WTC11 (cell line): ENCODE measurements at regions of chr1 and their contacts with region 1.

Region 1: GRCh38 chr1:7667625-7668218 is 103.4 kb upstream of the VAMP3 start:
- DNase-seq: peak; percentile 96
- ATAC-seq: peak; percentile 60
- H3K4me3 Mint-ChIP-seq: no peak overlapping the region
- H3K27ac Mint-ChIP-seq: no peak overlapping the region
- H3K4me1 Mint-ChIP-seq: peaks cover 19% of the 10 kb centered on the region
- H3K27me3 Mint-ChIP-seq: no peaks in the 10 kb centered on the region; the same call in 1 of the 2 replicates
- CTCF ChIP-seq: peak; percentile 99

Region 2: DNA sequence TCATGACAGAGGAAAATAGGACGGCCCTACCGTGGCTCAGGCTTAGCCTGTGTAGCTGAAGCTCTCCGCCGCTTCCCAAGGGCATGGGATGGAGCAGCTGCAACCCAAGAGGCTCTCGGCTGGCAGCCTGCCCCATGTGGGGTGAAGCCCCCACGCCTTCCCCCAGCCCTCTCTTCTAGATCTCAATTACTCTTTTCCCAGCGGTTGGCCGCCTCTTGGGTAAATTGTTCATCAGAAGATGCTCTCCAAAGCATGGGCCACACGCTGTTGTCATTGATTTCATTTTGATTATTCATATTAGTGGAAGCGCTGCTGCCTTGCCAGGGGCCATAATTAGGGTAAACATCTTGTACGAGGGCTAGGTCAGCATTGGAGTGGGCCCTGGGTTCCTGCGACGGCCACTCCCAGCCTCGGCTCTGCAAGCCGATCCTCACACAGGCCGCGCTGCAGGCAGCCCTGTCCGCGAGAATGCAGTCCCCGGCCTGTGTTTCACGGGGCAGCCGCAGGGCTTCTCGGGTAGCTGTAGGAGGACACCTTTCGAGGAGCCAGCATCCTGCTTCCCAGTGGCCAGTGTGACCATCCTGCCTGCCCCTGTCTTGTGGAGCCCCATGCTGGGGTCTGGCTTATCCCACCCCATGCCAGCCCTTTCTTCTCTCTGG is 11.0 kb before region 1 on chr1:
- CTCF ChIA-PET with region 1: interaction called, 18 read pairs
- POLR2A ChIA-PET with region 1: no interaction called
- DNase-seq: no peak
- ATAC-seq: no peak
- H3K4me3 Mint-ChIP-seq: no peak overlapping the region
- H3K27ac Mint-ChIP-seq: no peak overlapping the region
- H3K4me1 Mint-ChIP-seq: no peaks in the 10 kb centered on the region
- H3K27me3 Mint-ChIP-seq: no peaks in the 10 kb centered on the region; the same call in 1 of the 2 replicates
- CTCF ChIP-seq: no peak

Region 3: DNA sequence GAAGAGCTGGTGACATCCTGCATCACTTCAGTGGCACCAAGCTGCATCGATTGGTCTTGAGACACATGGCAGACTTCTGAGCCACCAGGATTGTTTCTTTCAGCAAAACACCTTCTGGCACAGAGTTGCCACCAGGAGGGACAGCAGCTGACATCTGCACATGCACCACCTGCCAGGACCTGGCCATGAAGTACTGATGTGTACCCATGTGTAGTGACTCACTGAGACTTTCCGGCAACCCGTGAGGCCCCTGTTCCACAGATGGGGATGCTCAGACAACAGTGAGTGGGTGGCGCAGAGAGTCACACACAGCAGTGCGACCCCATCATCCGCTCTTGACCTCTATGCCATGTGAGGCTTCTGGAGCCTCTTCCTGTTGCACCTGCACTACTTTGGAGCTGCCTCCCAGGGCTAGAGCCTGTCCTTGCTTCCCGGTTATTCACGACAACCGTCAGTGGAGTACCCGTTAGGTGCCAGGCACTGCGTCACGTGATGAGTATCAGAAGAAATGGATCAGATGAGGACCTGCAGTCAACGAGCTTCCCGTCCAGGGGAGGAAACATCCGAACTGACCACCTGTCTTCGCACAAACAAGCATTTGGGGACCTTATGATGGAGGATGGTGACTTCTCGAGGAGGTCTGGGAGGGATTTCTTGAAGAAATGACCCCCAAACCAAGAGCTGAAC is 22.9 kb after region 1 on chr1:
- CTCF ChIA-PET with region 1: interaction called, 35 read pairs
- POLR2A ChIA-PET with region 1: no interaction called
- DNase-seq: no peak
- ATAC-seq: no peak
- H3K4me3 Mint-ChIP-seq: no peak overlapping the region
- H3K27ac Mint-ChIP-seq: no peak overlapping the region
- H3K4me1 Mint-ChIP-seq: peaks cover 9% of the 10 kb centered on the region
- H3K27me3 Mint-ChIP-seq: peaks cover 20% of the 10 kb centered on the region
- CTCF ChIP-seq: no peak

Region 4: GRCh38 chr1:7743346-7743745 is 75.6 kb after region 1 on chr1:
- CTCF ChIA-PET with region 1: interaction called, 502 read pairs
- POLR2A ChIA-PET with region 1: no interaction called
- DNase-seq: no peak
- ATAC-seq: no peak
- H3K4me3 Mint-ChIP-seq: no peak overlapping the region
- H3K27ac Mint-ChIP-seq: no peak overlapping the region
- H3K4me1 Mint-ChIP-seq: no peaks in the 10 kb centered on the region
- H3K27me3 Mint-ChIP-seq: no peaks in the 10 kb centered on the region
- CTCF ChIP-seq: no peak

Region 5: GRCh38 chr1:7760245-7760644 is 92.5 kb after region 1 on chr1:
- CTCF ChIA-PET with region 1: interaction called, 502 read pairs
- POLR2A ChIA-PET with region 1: interaction called, 4 read pairs
- DNase-seq: no peak
- ATAC-seq: no peak
- H3K4me3 Mint-ChIP-seq: no peak overlapping the region
- H3K27ac Mint-ChIP-seq: no peak overlapping the region
- H3K4me1 Mint-ChIP-seq: peaks cover 9% of the 10 kb centered on the region
- H3K27me3 Mint-ChIP-seq: no peaks in the 10 kb centered on the region
- CTCF ChIP-seq: no peak

Region 6: GRCh38 chr1:7808253-7808844 is 140.6 kb after region 1 on chr1:
- CTCF ChIA-PET with region 1: interaction called, 12 read pairs
- POLR2A ChIA-PET with region 1: no interaction called
- DNase-seq: no peak
- ATAC-seq: peak; percentile 36; the same call in 1 of the 2 replicates
- H3K4me3 Mint-ChIP-seq: no peak overlapping the region
- H3K27ac Mint-ChIP-seq: no peak overlapping the region
- H3K4me1 Mint-ChIP-seq: no peaks in the 10 kb centered on the region
- H3K27me3 Mint-ChIP-seq: peaks cover 5% of the 10 kb centered on the region; the same call in 1 of the 2 replicates
- CTCF ChIP-seq: peak; percentile 49